ENCODE measurements at regions of chr3 and their contacts with region 1.

Region 1: GRCh38 chr3:103381296-103382079 is 946.7 kb downstream of the ZPLD1 start:
- DNase-seq: peak; percentile 20 to 42
- H3K4me3 ChIP-seq: no peak overlapping the region
- H3K27ac ChIP-seq: no peak overlapping the region
- H3K4me1 ChIP-seq: peaks cover 14% of the 10 kb centered on the region
- H3K27me3 ChIP-seq: no peaks in the 10 kb centered on the region
- CTCF ChIP-seq: no peak

Region 2: DNA sequence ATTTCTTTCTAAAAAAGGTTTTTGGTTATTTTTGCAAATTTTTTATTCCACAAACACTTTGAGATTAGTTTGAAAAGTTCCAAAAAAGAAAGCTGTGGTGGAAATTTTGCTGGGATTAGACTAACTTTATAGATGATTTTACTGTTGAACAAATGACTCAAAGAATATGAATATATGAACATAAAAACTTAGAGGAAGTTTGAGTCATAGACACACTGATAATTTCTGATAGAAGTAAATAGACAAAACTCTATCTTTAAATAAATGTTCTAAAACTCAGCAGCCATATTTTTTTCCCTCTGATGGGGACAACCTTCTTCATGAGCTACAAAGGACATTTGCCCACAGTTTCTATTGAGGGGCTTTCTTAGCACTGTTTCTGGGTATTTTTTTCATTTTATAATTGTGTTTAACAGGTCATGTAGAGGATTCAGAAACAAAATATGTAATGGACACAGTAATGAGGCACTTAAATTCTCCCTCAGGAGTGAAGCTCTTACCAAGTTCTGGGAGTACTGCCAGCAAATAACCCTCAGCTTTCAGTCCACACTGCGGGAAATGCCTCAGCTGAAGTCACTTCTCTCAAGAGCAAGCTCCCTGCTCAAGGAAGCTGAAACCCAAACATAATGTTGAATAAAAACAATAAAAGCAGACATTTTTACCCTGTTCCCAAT is 1374.5 kb before region 1 on chr3:
- CTCF ChIA-PET with region 1: no interaction called
- POLR2A ChIA-PET with region 1: interaction called, 19 read pairs
- intact Hi-C with region 1: no loop called
- DNase-seq: no peak
- H3K4me3 ChIP-seq: no peak overlapping the region
- H3K27ac ChIP-seq: no peak overlapping the region
- H3K4me1 ChIP-seq: no peaks in the 10 kb centered on the region
- H3K27me3 ChIP-seq: no peaks in the 10 kb centered on the region
- CTCF ChIP-seq: no peak